ENCODE measurements at regions of chr14 and their contacts with region 1.

Region 1: DNA sequence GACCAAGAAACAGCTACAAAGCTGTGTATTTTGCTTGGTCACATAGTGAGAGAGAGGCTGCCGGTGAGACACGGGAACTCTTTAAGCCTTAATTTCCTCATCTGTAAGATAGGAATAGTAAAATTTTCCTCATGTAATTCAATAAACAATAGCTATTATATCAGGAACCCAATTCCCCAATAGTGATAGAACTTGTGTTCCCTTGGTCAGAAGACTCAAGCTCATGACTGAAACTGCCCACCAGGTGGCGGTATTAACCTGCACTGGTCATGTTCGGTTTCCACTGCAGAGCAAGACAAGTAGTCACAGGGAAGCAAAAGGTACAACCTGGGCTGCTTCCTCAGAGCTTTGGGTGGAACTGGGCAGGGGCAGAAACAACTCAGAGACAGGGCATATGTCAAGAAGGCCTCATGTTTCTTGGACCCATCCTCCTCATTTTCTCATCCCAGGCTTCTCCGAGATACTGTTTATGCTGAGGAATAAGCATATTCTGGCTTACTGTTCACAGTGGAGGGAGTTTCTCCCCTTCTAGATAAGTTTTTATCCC is 4.2 kb upstream of the AJUBA start:
- DNase-seq: peak; percentile 60 to 70
- H3K4me3 ChIP-seq: no peak overlapping the region
- H3K27ac ChIP-seq: no peak overlapping the region
- H3K4me1 ChIP-seq: 0 out of 2 replicates have a peak, but pooled peaks cover 4% of the 10 kb centered on the region
- H3K27me3 ChIP-seq: no peaks in the 10 kb centered on the region
- CTCF ChIP-seq: peak; percentile 82

Region 2: GRCh38 chr14:22929104-22929847 is 57.3 kb before region 1 on chr14 and contains the start of gene PRMT5:
- CTCF ChIA-PET with region 1: interaction called, 9 read pairs
- POLR2A ChIA-PET with region 1: interaction called, 13 read pairs
- intact Hi-C with region 1: loop called (anchors 2 kb)
- DNase-seq: peak; percentile 94 to 98
- H3K4me3 ChIP-seq: peak within 1 kb of the TSS; percentile 85
- H3K27ac ChIP-seq: peak within 1 kb of the TSS; percentile 42
- H3K4me1 ChIP-seq: peaks cover 32% of the 10 kb centered on the region
- H3K27me3 ChIP-seq: no peaks in the 10 kb centered on the region
- CTCF ChIP-seq: no peak
- total RNA-seq, gene PRMT5: 58.6 and 73.2 TPM in 2 replicates

Region 3: DNA sequence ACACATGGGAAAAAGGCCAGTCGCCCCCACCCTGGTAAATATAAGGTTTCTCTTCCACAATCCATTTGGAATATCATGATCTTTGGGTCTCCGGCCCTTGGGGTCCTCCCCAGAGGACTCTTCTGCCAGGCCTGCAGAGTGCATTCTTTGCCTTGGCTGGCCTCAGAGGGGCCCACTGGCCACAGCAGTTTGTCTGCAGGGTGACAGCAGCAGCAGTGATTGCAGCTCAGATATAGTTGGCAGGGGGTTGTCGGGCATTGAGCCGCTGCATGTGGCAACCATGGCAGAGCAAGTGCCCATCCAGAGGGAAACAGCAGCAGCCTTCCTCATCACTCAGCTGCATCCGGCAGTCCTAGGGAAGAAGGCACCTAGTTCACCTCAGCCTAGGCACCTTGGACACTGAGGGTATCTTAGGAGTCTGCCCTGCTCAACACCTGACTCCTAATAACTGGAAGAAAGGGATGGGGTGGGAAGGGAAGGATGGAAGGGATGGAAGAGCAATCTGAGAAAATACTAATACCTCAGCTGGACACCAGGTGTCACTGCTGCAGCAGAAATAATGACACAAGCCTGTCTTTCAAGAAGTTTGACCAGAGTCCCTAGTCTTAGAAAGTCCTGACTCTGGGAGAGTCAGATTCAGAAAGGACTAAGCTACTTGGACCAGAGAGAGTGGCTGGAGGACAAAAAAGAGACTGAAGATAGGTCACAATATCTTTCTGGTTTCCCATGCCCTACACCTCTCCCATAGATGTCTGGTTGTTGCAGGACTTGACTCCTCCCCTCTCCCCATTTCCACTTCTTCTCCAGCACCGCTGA is 13.2 kb before region 1 on chr14:
- CTCF ChIA-PET with region 1: interaction called, 12 read pairs
- POLR2A ChIA-PET with region 1: interaction called, 8 read pairs
- intact Hi-C with region 1: loop called (anchors 1 kb)
- DNase-seq: peak in 1 of 2 experiments; percentile 44
- H3K4me3 ChIP-seq: no peak overlapping the region
- H3K27ac ChIP-seq: no peak overlapping the region
- H3K4me1 ChIP-seq: peaks cover 26% of the 10 kb centered on the region
- H3K27me3 ChIP-seq: no peaks in the 10 kb centered on the region
- CTCF ChIP-seq: peak; percentile 70

Region 4: GRCh38 chr14:23006544-23007419 is 20.2 kb after region 1 on chr14:
- CTCF ChIA-PET with region 1: interaction called, 21 read pairs
- POLR2A ChIA-PET with region 1: no interaction called
- intact Hi-C with region 1: no loop called
- DNase-seq: peak; percentile 86 to 92
- H3K4me3 ChIP-seq: peak overlapping the region; percentile 74
- H3K27ac ChIP-seq: peak overlapping the region; percentile 74
- H3K4me1 ChIP-seq: peaks cover 34% of the 10 kb centered on the region
- H3K27me3 ChIP-seq: no peaks in the 10 kb centered on the region
- CTCF ChIP-seq: no peak

Region 5: GRCh38 chr14:23112359-23113178 is 126.0 kb after region 1 on chr14:
- CTCF ChIA-PET with region 1: interaction called, 5 read pairs
- POLR2A ChIA-PET with region 1: no interaction called
- intact Hi-C with region 1: loop called (anchors 2 kb)
- DNase-seq: peak in 1 of 2 experiments; percentile 62
- H3K4me3 ChIP-seq: no peak overlapping the region
- H3K27ac ChIP-seq: no peak overlapping the region
- H3K4me1 ChIP-seq: peaks cover 41% of the 10 kb centered on the region
- H3K27me3 ChIP-seq: no peaks in the 10 kb centered on the region
- CTCF ChIP-seq: no peak